ENCODE measurements at regions of chr9 and their contacts with region 1.

Region 1: GRCh38 chr9:128420060-128420650 is 502 bp upstream of the CERCAM start:
- DNase-seq: peak; percentile 24 to 84 (median 66)
- ATAC-seq: peak; percentile 76
- H3K4me3 ChIP-seq: peak overlapping the region; percentile 55 to 61
- H3K4me3 Mint-ChIP-seq: peak overlapping the region; percentile 78
- H3K27ac ChIP-seq: no peak overlapping the region
- H3K27ac Mint-ChIP-seq: no peak overlapping the region
- H3K4me1 ChIP-seq: peaks cover 14% of the 10 kb centered on the region
- H3K4me1 Mint-ChIP-seq: peaks cover 11% of the 10 kb centered on the region
- H3K27me3 ChIP-seq: peaks cover 0 to 10% of the 10 kb centered on the region in 2 experiments
- H3K27me3 Mint-ChIP-seq: peaks cover 23% of the 10 kb centered on the region
- CTCF ChIP-seq: peak; percentile 75

Region 2: GRCh38 chr9:128438343-128439109 is 18.4 kb after region 1 on chr9:
- CTCF ChIA-PET with region 1: interaction called, 14 read pairs
- POLR2A ChIA-PET with region 1: no interaction called
- intact Hi-C with region 1: no loop called
- DNase-seq: peak; percentile 63 to 89 (median 79)
- ATAC-seq: peak; percentile 97
- H3K4me3 ChIP-seq: no peak overlapping the region
- H3K4me3 Mint-ChIP-seq: no peak overlapping the region
- H3K27ac ChIP-seq: no peak overlapping the region
- H3K27ac Mint-ChIP-seq: no peak overlapping the region
- H3K4me1 ChIP-seq: peaks cover 9% of the 10 kb centered on the region
- H3K4me1 Mint-ChIP-seq: peaks cover 3% of the 10 kb centered on the region
- H3K27me3 ChIP-seq: no peaks in the 10 kb centered on the region
- H3K27me3 Mint-ChIP-seq: no peaks in the 10 kb centered on the region
- CTCF ChIP-seq: peak; percentile 66

Measured in CD8-positive, alpha-beta T cell (primary cell).